SK-N-SH (cell line): ENCODE measurements at regions of chr6 and their contacts with region 1.

Region 1: GRCh38 chr6:138588805-138589434 is 89.6 kb upstream of the NHSL1 start:
- DNase-seq: peak; percentile 61
- H3K4me3 ChIP-seq: no peak overlapping the region
- H3K27ac ChIP-seq: no peak overlapping the region
- H3K4me1 ChIP-seq: peaks cover 0 to 6% of the 10 kb centered on the region in 2 experiments; a peak in 1 of 4 replicates
- H3K27me3 ChIP-seq: peaks cover 10% of the 10 kb centered on the region; the same call in 1 of the 2 replicates
- CTCF ChIP-seq: peak; percentile 83
- EP300 ChIP-seq: no peak
- RAD21 ChIP-seq: peak; percentile 80

Region 2: DNA sequence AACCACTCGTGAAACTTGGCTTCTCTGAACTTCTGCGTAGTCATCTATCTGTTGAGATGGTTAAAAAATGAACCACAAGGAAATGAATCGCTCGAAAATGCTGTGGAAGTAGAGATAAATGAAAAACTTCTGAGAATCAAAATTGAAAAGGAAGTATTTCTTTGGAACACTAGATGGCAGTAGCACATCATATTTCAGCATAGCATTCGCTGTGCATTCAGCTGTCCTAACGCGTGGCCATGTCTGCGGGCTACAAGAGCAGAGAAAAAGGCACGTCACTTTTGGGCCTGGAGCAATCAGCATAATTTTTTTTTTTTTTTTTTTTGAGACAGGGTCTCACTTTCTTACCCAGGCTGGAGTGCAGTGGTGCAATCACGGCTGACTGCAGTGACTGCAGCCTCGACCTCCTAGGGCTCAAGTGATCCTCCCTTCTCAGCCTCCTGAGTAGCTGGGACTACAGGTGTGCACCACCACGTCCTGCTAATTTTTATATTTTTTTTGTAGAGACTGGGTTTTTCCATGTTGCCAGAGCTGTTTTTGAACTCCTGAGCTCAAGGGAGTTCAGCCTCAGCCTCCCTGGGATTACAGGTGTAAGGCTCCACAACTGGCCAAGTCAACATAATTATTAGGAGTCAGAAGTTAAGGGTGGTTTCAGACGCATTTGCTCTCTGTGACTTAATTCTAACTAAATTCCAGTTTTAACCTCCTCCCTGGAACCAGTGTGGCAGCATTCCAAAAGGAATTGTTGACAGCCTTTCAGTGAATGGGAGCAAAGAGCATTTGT is 472.9 kb before region 1 on chr6:
- CTCF ChIA-PET with region 1: interaction called, 19 read pairs
- POLR2A ChIA-PET with region 1: no interaction called
- DNase-seq: peak; percentile 51
- H3K4me3 ChIP-seq: no peak overlapping the region; a peak in 1 of 4 replicates
- H3K27ac ChIP-seq: no peak overlapping the region
- H3K4me1 ChIP-seq: no peaks in the 10 kb centered on the region
- H3K27me3 ChIP-seq: peaks cover 16% of the 10 kb centered on the region; the same call in 1 of the 2 replicates
- CTCF ChIP-seq: peak; percentile 71
- EP300 ChIP-seq: no peak
- RAD21 ChIP-seq: peak; percentile 87

Region 3: GRCh38 chr6:138428944-138429598 is 159.8 kb before region 1 on chr6:
- CTCF ChIA-PET with region 1: interaction called, 19 read pairs
- POLR2A ChIA-PET with region 1: no interaction called
- DNase-seq: peak; percentile 54
- H3K4me3 ChIP-seq: no peak overlapping the region; a peak in 1 of 4 replicates
- H3K27ac ChIP-seq: no peak overlapping the region
- H3K4me1 ChIP-seq: peaks cover 0 to 5% of the 10 kb centered on the region in 2 experiments; a peak in 1 of 4 replicates
- H3K27me3 ChIP-seq: peaks cover 61% of the 10 kb centered on the region
- CTCF ChIP-seq: peak; percentile 69
- EP300 ChIP-seq: no peak
- RAD21 ChIP-seq: peak; percentile 71

Region 4: DNA sequence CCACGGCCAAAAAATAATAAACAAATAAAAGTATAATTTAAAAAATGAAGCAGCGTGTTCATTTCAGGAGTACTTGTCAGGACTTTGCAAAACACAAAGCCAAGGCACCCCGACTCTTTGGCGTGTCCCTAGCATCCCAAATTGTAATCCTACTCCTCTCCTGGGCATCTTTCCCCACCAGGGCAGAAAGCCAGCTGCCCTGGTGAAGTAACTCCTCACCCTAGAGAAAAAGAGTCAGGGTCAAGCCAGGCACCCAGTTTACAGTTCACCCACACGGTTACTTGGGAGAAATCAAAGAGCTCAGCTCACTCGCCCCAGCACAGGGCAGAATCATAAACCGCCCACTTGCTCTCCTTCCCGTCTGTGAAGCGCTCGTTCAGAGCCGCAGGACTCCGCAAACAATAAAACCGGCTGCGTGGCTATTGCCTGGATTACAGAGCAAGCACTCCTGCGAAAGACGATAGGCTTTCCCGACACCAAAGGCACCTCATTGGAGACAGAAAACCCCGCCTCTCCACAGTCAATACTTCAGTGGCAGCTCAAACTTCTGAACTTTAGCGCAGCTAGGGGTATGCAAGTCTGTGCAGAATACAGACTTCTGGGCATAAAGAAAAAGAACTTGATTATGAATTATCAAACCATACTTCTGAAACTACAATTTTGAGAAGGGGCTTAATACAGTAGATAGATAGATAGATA is 16.6 kb before region 1 on chr6:
- CTCF ChIA-PET with region 1: interaction called, 19 read pairs
- POLR2A ChIA-PET with region 1: no interaction called
- DNase-seq: no peak
- H3K4me3 ChIP-seq: no peak overlapping the region
- H3K27ac ChIP-seq: no peak overlapping the region
- H3K4me1 ChIP-seq: no peaks in the 10 kb centered on the region
- H3K27me3 ChIP-seq: peaks cover 43% of the 10 kb centered on the region
- CTCF ChIP-seq: no peak
- EP300 ChIP-seq: no peak
- RAD21 ChIP-seq: no peak

Region 5: DNA sequence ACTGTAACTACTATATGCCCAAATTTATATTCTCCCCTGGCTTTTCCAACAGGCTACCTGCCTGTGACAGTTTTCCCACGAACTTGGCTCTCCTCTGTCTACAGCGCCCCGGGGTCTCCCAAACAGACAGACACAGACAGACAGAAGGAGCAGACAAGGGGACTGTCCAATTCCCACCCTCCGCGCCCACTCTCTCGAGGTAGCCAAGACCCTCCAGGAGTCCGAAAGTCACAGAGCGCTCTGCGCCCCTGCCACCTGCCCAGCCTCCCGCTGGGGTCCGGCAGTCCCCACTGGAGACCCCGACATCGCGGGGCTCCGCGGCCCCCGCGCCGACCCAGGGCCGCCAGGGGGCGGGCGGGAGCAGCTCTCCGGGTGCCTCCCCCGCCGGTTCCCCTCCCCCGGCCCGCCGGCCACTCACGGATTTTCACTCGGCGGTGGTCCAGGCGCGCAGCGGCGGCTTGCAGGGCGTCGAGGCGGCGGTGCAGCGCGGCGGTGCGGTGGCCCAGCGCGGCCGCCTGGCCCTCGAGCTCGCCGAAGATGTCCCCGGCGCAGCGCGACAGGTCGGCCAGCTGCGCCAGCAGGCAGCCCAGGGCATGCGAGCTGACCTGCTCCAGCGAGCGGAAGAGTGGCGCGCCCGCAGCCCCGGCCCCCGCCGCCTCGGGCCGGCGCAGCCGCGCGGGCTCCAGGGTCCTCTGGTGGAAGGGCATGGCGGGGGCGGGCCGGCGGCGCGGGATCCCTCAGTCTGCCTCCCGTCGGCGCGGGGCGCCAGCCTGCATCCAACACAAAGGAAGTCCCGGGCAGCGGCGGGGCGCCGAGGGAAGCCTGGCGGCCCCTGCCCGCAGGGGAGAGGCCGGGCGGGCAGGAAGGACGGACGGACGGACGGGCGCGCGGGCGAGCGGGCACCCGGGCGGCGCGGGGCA is 103.4 kb after region 1 on chr6:
- CTCF ChIA-PET with region 1: no interaction called
- POLR2A ChIA-PET with region 1: no interaction called
- DNase-seq: peak; percentile 88
- H3K4me3 ChIP-seq: peak overlapping the region; percentile 43 to 51
- H3K27ac ChIP-seq: no peak overlapping the region
- H3K4me1 ChIP-seq: no peaks in the 10 kb centered on the region; a peak in 1 of 4 replicates
- H3K27me3 ChIP-seq: peaks cover 25% of the 10 kb centered on the region
- CTCF ChIP-seq: peak; percentile 64
- EP300 ChIP-seq: no peak
- RAD21 ChIP-seq: no peak

Region 6: DNA sequence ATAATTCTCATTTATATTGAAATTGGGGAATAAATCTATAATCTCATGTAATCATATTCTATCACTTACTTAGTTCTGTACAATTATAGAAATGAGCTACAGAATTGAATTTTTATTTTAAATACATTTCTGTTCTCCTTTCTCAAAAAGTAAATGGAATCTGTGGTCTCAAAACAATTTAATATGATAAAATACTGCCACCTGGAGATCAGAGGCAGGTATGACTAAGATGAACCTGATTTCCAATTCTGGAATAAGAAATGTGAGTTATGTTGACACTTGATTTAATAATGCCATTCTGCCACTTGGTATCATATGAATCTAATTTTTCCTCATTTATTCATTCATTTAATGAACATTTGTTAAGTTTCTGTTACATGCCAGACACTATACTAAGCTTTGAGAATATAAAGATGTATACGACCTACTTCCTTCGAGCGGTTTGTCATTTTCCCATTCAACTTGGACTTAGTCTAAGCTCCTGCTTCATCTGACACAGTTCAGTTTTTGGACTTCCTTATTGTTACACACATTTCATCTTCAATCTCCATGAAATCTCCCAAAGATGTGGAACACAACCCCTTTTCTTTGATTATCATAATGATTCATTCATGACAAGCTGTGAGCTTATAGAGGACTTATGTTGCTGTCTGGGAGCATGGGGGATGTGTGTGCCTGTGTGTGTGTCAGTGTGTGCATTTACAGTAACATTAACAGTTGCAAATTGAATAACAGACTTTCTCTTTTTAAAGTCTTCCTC is 177.2 kb after region 1 on chr6:
- CTCF ChIA-PET with region 1: interaction called, 68 read pairs
- POLR2A ChIA-PET with region 1: no interaction called
- DNase-seq: peak; percentile 22
- H3K4me3 ChIP-seq: no peak overlapping the region; a peak in 1 of 4 replicates
- H3K27ac ChIP-seq: no peak overlapping the region
- H3K4me1 ChIP-seq: no peaks in the 10 kb centered on the region
- H3K27me3 ChIP-seq: no peaks in the 10 kb centered on the region
- CTCF ChIP-seq: peak; percentile 71
- EP300 ChIP-seq: no peak
- RAD21 ChIP-seq: peak; percentile 70

Region 7: GRCh38 chr6:139364302-139364981 is 775.5 kb after region 1 on chr6:
- CTCF ChIA-PET with region 1: interaction called, 11 read pairs
- POLR2A ChIA-PET with region 1: no interaction called
- DNase-seq: peak; percentile 45
- H3K4me3 ChIP-seq: no peak overlapping the region; a peak in 1 of 4 replicates
- H3K27ac ChIP-seq: no peak overlapping the region
- H3K4me1 ChIP-seq: peaks cover 0 to 19% of the 10 kb centered on the region in 2 experiments; a peak in 3 of 4 replicates
- H3K27me3 ChIP-seq: no peaks in the 10 kb centered on the region
- CTCF ChIP-seq: peak; percentile 72
- EP300 ChIP-seq: no peak
- RAD21 ChIP-seq: peak; percentile 85